ENCODE measurements at regions of chr10 and their contacts with region 1.

Region 1: DNA sequence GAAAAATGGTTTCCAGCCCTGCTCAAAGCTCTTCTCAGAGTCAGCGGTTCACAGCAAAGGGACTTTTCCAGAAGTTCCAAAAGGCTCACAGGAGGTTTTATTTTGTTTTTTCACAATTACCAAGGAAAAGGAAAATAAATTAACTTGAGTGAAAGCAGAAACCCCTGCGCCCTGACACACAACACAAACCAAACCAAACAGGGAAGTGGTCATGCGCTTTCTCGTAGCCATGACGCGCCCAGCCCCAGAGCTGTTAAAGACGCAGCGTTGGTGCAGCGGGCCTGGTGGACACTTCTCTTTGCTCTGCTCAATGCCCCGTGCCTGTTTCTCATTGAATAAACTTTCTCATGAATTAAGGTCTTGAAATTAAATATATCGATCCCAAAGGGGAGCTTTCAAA is 134.4 kb upstream of the LYZL2 start:
- DNase-seq: no peak
- H3K4me3 ChIP-seq: no peak overlapping the region
- H3K27ac ChIP-seq: no peak overlapping the region
- H3K4me1 ChIP-seq: no peaks in the 10 kb centered on the region
- H3K27me3 ChIP-seq: no peaks in the 10 kb centered on the region
- CTCF ChIP-seq: no peak
- EP300 ChIP-seq: no peak
- RAD21 ChIP-seq: no peak

Region 2: DNA sequence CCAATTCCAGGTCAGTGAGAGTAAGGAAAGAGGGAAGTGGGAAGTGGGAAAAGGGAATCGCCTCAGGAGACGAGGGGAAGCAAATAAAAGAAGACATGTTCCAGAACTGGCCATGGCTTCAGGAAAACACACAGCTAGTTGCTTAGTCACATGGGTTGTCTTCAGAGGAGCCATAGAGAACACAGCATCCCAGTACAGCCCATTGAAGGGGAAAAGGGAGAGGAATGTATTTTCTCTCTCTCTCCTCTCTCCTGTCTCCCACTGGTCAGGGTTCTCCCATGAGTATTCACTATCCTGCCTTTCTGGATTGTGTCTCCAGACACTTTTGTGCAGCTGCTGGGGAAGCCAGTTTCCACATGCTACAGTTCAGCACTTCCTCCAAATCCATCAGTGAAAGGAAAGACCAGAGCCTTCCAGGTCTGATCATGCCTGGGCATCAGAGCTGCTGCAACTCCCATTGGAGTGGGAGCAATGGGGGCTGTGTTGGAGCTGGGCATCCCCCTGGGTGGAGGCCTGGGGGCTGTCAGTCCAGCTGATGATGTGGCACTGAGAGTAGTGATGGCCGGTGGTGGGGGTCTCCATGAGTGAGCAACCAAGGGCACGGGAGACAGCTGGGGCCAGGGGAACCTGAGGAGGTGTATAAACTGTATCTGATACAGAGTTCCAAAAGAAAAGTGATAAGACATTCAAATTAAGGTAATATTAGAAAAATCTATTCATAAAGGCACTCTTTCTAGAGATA is 291.3 kb before region 1 on chr10:
- CTCF ChIA-PET with region 1: no interaction called
- POLR2A ChIA-PET with region 1: no interaction called
- DNase-seq: no peak
- H3K4me3 ChIP-seq: no peak overlapping the region
- H3K27ac ChIP-seq: no peak overlapping the region
- H3K4me1 ChIP-seq: no peaks in the 10 kb centered on the region
- H3K27me3 ChIP-seq: no peaks in the 10 kb centered on the region
- CTCF ChIP-seq: no peak
- EP300 ChIP-seq: no peak
- RAD21 ChIP-seq: no peak

Region 3: DNA sequence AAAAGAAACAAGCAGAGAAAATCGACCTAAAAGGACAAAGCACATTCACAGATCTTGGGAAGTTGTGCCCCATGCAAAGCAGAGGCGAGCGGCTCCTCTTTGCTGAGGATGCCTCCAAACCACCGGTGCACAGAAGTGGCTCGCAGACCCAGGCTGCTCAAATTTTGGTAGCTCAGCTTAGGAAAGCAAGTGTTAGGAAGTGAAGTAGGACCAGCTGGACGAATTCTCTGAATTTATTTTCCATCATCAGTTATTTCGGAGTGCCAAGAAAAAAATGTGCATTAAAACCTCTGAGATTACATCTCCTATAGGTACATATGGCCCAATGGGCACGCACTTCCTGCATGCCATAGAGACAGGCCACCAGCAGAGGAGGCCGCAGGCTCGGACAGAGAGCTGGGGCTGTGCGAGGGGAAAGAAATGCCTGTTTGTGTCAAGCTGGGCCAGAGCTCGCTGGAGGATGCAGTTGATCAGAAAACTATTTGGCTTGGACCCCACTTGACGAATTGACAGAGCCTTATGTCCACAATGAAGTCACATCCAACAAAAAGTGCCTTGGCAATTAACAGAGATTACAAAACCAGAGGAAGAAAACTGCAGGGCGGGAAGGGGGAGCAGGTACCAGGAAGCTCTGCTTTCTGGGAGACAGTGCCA is 12.1 kb before region 1 on chr10:
- CTCF ChIA-PET with region 1: interaction called, 14 read pairs
- POLR2A ChIA-PET with region 1: no interaction called
- DNase-seq: peak; percentile 67
- H3K4me3 ChIP-seq: no peak overlapping the region; a peak in 1 of 4 replicates
- H3K27ac ChIP-seq: peak overlapping the region in 1 of 2 experiments; percentile 64; a peak in 2 of 4 replicates
- H3K4me1 ChIP-seq: peaks cover 0 to 30% of the 10 kb centered on the region in 2 experiments; a peak in 1 of 4 replicates
- H3K27me3 ChIP-seq: no peaks in the 10 kb centered on the region
- CTCF ChIP-seq: peak; percentile 79
- EP300 ChIP-seq: no peak
- RAD21 ChIP-seq: peak; percentile 86

Region 4: GRCh38 chr10:30980951-30981616 is 217.2 kb after region 1 on chr10:
- CTCF ChIA-PET with region 1: no interaction called
- POLR2A ChIA-PET with region 1: no interaction called
- DNase-seq: no peak
- H3K4me3 ChIP-seq: no peak overlapping the region
- H3K27ac ChIP-seq: no peak overlapping the region
- H3K4me1 ChIP-seq: no peaks in the 10 kb centered on the region
- H3K27me3 ChIP-seq: no peaks in the 10 kb centered on the region
- CTCF ChIP-seq: no peak
- EP300 ChIP-seq: no peak
- RAD21 ChIP-seq: no peak